Calu3 (cell line): ENCODE measurements at regions of chrX and their contacts with region 1.

Region 1: GRCh38 chrX:123236859-123237258 is 52.8 kb downstream of the GRIA3 start:
- DNase-seq: no peak
- H3K4me3 Mint-ChIP-seq: no peak overlapping the region
- H3K27ac Mint-ChIP-seq: no peak overlapping the region
- H3K4me1 Mint-ChIP-seq: no peaks in the 10 kb centered on the region
- H3K27me3 Mint-ChIP-seq: no peaks in the 10 kb centered on the region
- CTCF ChIP-seq: no peak

Region 2: GRCh38 chrX:122238801-122239200 is 998.1 kb before region 1 on chrX:
- CTCF ChIA-PET with region 1: no interaction called
- intact Hi-C with region 1: loop called (anchors 10 kb)
- DNase-seq: no peak
- H3K4me3 Mint-ChIP-seq: no peak overlapping the region
- H3K27ac Mint-ChIP-seq: no peak overlapping the region
- H3K4me1 Mint-ChIP-seq: no peaks in the 10 kb centered on the region
- H3K27me3 Mint-ChIP-seq: no peaks in the 10 kb centered on the region
- CTCF ChIP-seq: no peak

Region 3: DNA sequence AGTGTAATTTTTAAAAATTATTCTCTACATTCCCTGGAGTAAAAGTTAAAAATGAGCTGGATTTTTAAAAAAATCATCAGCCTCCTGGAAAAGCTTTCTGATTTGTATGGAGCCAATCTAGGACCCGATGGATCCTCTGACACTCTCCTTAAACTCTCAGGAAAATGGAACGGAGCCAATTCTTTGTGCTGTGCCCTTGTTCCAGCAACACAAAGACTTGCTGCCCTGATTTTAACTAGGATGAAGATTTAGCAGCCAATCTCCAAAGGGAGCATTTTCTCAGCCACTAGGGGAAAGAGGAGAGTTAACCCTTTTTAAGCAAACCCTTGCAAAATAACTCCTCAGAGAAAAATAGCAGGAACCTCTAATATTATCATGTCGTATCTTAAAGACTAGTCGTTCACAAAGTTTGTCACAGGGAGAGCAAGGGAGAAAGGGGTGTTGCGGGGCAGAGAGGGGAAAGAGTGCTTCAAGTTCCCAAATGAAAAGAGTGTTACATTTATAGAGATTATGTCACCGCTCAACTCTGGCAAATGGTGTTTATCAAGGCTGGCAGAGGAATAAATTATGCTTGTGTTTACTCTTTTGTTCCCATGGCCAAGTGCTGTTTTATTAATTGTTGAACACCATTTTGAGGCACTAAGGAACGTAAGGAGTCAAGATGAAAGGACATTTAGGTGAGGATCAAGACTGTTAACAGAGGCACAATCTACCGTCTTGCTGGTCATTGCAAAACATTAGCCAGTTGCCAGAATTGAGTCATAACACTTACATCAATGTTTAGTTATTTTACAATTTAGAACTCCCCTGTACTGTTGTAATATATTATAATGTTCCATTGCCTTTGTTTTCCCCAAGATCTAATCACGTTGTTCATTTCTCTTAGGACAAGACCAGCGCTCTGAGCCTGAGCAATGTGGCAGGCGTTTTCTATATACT is 245.3 kb after region 1 on chrX:
- CTCF ChIA-PET with region 1: no interaction called
- intact Hi-C with region 1: no loop called
- DNase-seq: no peak
- H3K4me3 Mint-ChIP-seq: no peak overlapping the region
- H3K27ac Mint-ChIP-seq: no peak overlapping the region
- H3K4me1 Mint-ChIP-seq: no peaks in the 10 kb centered on the region
- H3K27me3 Mint-ChIP-seq: peaks cover 39% of the 10 kb centered on the region
- CTCF ChIP-seq: no peak